Common myeloid progenitor, CD34-positive (primary cell): ENCODE measurements at regions of chr1 and their contacts with region 1.

Region 1: GRCh38 chr1:40315239-40315794 is 1.8 kb downstream of the COL9A2 start:
- DNase-seq: peak; percentile 88 to 96 (median 95)
- H3K4me3 ChIP-seq: peak overlapping the region; percentile 42 to 77 (median 60)
- H3K27ac ChIP-seq: no peak overlapping the region
- H3K4me1 ChIP-seq: peaks cover 0 to 43% (median 43%) of the 10 kb centered on the region in 4 experiments
- H3K27me3 ChIP-seq: peaks cover 5 to 35% (median 19%) of the 10 kb centered on the region in 5 experiments

Region 2: GRCh38 chr1:40270152-40270834 is 45.0 kb before region 1 on chr1:
- CTCF ChIA-PET with region 1: interaction called, 17 read pairs
- POLR2A ChIA-PET with region 1: no interaction called
- DNase-seq: no peak
- H3K4me3 ChIP-seq: no peak overlapping the region
- H3K27ac ChIP-seq: no peak overlapping the region
- H3K4me1 ChIP-seq: no peaks in the 10 kb centered on the region
- H3K27me3 ChIP-seq: no peaks in the 10 kb centered on the region

Region 3: GRCh38 chr1:40299366-40300248 is 15.7 kb before region 1 on chr1:
- CTCF ChIA-PET with region 1: interaction called, 13 read pairs
- POLR2A ChIA-PET with region 1: no interaction called
- DNase-seq: peak; percentile 29 to 81 (median 76)
- H3K4me3 ChIP-seq: no peak overlapping the region
- H3K27ac ChIP-seq: no peak overlapping the region
- H3K4me1 ChIP-seq: peaks cover 0 to 15% (median 5%) of the 10 kb centered on the region in 4 experiments
- H3K27me3 ChIP-seq: no peaks in the 10 kb centered on the region